B cell (primary cell): ENCODE measurements at regions of chr1 and their contacts with region 1.

Region 1: GRCh38 chr1:15885701-15886610 is 38.4 kb downstream of the SPEN start:
- DNase-seq: peak; percentile 75
- ATAC-seq: peak; percentile 59
- H3K4me3 ChIP-seq: peak overlapping the region; percentile 28 to 72 (median 47)
- H3K4me3 Mint-ChIP-seq: peak overlapping the region; percentile 82
- H3K27ac ChIP-seq: peak overlapping the region; percentile 74 to 84
- H3K27ac Mint-ChIP-seq: peak overlapping the region; percentile 90
- H3K4me1 ChIP-seq: peaks cover 51 to 56% of the 10 kb centered on the region in 2 donors
- H3K4me1 Mint-ChIP-seq: peaks cover 62% of the 10 kb centered on the region
- H3K27me3 ChIP-seq: no peaks in the 10 kb centered on the region
- H3K27me3 Mint-ChIP-seq: no peaks in the 10 kb centered on the region
- CTCF ChIP-seq: no peak

Region 2: DNA sequence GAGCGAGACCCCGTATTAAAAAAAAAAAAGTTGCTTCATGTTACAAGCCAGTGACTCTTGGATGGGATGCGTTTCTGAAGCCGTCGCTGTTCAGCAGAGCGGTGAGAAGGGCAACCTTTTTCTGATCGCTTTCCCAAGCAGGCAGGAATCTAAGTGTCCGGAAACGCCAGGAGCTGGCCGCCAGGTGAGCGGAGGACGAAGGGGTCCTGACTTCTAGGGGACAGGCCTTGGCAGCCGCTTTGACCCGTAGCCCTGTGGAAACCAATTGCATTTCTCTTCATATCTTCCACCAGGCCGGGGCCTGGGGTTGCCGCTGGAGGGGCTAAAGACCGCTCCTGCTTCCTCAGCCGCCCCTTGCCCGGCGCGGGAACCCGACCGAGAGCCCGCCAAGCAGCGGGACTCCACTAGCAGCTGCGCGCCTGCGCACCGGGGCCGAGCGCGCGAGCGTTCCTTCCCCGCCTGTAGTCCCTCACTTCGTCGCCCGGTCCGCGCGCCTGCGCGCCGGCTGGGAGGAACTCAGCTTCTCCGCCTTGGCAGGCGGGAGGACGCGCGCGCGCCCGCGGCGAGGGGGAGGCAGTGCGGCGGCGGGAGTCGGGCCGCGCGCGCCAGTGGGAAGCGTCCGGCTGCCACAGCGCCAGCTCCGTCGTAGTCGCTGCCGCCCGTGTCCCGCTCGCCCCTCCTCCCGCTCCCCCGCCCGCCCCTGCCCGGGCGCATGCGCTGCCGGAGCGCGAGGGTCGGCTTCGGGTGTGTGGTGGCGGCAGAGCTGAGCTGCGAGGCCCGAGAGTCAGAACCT is 38.7 kb before region 1 on chr1 and contains the start of gene SPEN:
- CTCF ChIA-PET with region 1: interaction called, 4 read pairs
- POLR2A ChIA-PET with region 1: interaction called, 6 read pairs
- intact Hi-C with region 1: loop called (anchors 1 kb)
- DNase-seq: peak; percentile 99
- ATAC-seq: peak; percentile 80
- H3K4me3 ChIP-seq: peak within 1 kb of the TSS; percentile 82 to 99 (median 94)
- H3K4me3 Mint-ChIP-seq: peak within 1 kb of the TSS; percentile 97
- H3K27ac ChIP-seq: peak within 1 kb of the TSS; percentile 87 to 98
- H3K27ac Mint-ChIP-seq: peak within 1 kb of the TSS; percentile 99
- H3K4me1 ChIP-seq: peaks cover 51 to 72% of the 10 kb centered on the region in 2 donors
- H3K4me1 Mint-ChIP-seq: peaks cover 53% of the 10 kb centered on the region
- H3K27me3 ChIP-seq: no peaks in the 10 kb centered on the region
- H3K27me3 Mint-ChIP-seq: no peaks in the 10 kb centered on the region
- CTCF ChIP-seq: no peak
- total RNA-seq, gene SPEN: 126 and 140 TPM in 2 replicates

Region 3: DNA sequence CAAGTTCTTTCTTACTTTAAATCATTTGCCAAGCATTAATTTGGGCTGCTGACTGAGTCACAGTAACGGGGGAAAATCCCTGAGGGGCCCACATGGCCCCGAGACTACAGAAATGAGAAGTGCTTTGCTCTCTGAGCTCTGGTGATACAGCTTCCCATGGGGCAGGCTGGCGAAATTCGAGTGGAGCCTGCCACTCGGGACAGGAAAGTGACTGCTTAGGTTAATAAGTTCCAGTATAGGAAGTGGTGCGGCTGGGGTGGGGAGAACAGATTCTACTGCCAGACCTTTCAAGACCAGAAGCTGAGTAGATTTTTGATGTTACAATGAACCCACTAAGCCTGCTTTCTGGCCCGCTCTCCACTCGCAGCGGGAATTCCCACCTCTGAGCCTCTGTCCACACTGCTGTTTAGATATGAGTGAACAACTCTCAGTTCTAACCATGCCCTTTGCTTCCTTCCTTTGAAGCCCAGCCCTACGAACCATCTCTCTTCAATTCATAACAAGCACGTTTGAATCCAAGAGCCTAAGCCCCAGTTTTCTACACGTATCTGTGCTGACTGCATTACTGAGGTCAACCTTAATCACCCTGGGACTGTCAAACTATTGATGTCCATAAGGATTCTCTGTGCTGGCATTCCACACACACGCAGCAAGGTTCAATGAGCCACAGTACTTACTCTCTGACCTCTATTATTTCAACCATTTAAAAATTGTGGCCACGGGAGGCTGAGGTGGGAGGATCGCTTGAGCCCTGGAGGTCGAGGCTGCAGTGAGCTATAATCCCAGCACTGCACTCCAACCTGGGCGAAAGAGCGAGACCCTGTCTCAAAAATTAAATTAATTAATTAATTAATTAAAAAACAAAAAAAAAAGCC is 80.4 kb after region 1 on chr1:
- CTCF ChIA-PET with region 1: no interaction called
- POLR2A ChIA-PET with region 1: interaction called, 3 read pairs
- intact Hi-C with region 1: loop called (anchors 2 kb)
- DNase-seq: peak; percentile 88
- ATAC-seq: peak; percentile 79
- H3K4me3 ChIP-seq: peak overlapping the region in 4 of 5 experiments; percentile 27 to 40 (median 30)
- H3K4me3 Mint-ChIP-seq: peak overlapping the region; percentile 74
- H3K27ac ChIP-seq: peak overlapping the region; percentile 86 to 88
- H3K27ac Mint-ChIP-seq: peak overlapping the region; percentile 97
- H3K4me1 ChIP-seq: peaks cover 56 to 66% of the 10 kb centered on the region in 2 donors
- H3K4me1 Mint-ChIP-seq: peaks cover 65% of the 10 kb centered on the region
- H3K27me3 ChIP-seq: no peaks in the 10 kb centered on the region
- H3K27me3 Mint-ChIP-seq: no peaks in the 10 kb centered on the region
- CTCF ChIP-seq: no peak